Breast epithelium (tissue), 4 donors: ENCODE measurements at regions of chr4 and their contacts with region 1.

Region 1: GRCh38 chr4:37054531-37055077 is 189.9 kb upstream of the NWD2 start:
- DNase-seq: no peak
- H3K4me3 ChIP-seq: no peak overlapping the region
- H3K27ac ChIP-seq: no peak overlapping the region
- H3K4me1 ChIP-seq: no peaks in the 10 kb centered on the region
- H3K27me3 ChIP-seq: no peaks in the 10 kb centered on the region
- CTCF ChIP-seq: no peak
- POLR2A ChIP-seq: no peak

Region 2: DNA sequence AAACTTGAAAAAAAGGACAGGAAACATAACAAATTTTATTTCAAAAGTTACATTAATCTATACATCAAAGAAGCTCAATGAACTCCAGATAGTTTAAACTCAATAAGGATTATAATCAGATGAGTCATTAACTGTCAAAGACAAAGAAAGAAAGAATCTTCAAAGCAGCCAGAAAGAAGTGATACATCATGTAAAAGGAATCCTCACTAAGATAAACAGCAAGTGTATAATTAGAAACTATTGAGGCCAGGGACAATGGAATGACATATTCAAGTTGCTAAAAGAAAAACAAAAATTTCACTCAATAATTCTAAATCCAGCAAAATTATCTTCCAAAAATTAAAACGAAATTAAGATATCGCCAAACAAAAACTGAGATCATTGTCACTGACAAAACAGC is 28.3 kb after region 1 on chr4:
- intact Hi-C with region 1: no loop called
- DNase-seq: no peak
- H3K4me3 ChIP-seq: no peak overlapping the region
- H3K27ac ChIP-seq: no peak overlapping the region
- H3K4me1 ChIP-seq: no peaks in the 10 kb centered on the region
- H3K27me3 ChIP-seq: no peaks in the 10 kb centered on the region
- CTCF ChIP-seq: no peak
- POLR2A ChIP-seq: no peak

Region 3: DNA sequence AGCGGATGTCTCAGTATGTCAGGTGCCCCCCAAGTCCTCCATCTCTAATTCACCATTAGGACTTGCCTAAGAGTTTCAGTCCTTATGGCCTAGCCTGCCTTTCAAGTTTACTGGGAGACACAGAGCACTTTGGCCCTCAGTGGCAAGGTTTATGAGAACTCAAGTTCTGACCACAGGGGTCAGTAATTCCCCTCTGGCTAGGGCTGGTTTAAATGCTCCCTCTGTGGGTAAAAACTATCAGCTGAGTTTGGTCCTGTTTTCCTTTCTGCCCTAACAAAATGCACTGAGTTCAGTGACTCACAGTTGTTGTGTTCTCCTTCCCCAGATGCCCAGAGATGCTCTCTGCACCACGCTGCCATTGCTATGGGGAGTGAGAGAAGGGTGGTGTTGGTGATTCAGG is 468.4 kb after region 1 on chr4:
- intact Hi-C with region 1: loop called (anchors 5 kb)
- DNase-seq: no peak
- H3K4me3 ChIP-seq: no peak overlapping the region
- H3K27ac ChIP-seq: no peak overlapping the region
- H3K4me1 ChIP-seq: no peaks in the 10 kb centered on the region
- H3K27me3 ChIP-seq: no peaks in the 10 kb centered on the region
- CTCF ChIP-seq: no peak
- POLR2A ChIP-seq: no peak